ENCODE measurements at regions of chr1 and their contacts with region 1.

Region 1: DNA sequence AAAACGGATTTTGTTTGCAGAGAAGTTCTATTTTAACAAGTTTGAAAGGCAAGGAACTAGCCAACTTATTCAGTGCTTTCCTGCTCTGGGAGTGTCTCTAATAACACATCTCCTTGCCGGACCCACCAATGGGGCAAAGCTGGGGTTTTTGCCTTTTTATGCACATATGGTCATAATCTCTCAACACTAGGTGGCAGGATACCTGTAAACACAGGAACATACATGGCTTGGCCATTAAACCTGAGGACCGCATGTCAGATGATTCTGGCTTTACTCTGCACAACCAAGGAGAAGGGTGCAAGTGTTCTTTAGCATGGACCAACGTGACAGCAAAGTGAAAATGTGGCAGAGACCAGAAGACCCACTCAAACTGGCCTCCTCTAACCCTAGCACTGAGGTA is 4.9 kb downstream of the TMEM9 start:
- DNase-seq: no peak
- H3K4me3 Mint-ChIP-seq: no peak overlapping the region
- H3K27ac Mint-ChIP-seq: no peak overlapping the region
- H3K4me1 Mint-ChIP-seq: peaks cover 10% of the 10 kb centered on the region
- H3K27me3 Mint-ChIP-seq: no peaks in the 10 kb centered on the region

Region 2: DNA sequence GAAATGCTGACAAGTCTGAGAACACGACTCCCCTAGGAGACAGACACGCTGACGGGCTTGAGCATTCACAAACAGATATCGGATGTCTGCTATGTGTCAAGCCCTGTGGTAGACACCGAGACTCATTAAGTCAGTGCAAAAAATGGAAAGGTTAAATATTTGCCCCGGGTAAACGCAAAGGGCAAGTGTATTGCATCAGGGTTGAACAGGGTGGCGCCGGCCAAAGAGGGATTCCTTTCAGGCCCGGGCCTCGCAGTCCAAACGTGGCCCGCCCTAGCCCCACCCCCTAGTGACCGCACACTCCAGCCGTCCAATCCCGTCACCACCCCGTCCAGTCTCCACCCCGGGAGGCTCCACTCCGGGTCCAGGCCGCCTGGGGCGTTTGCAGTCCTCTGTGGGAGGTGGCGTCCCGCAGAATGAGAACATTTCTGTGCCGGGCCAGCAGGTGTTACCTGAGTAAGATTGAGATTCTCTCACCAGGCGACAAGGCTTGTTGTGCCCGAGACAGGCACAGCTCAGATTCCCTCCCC is 21.2 kb after region 1 on chr1:
- CTCF ChIA-PET with region 1: interaction called, 11 read pairs
- DNase-seq: peak; percentile 77
- H3K4me3 Mint-ChIP-seq: peak overlapping the region; percentile 63
- H3K27ac Mint-ChIP-seq: no peak overlapping the region
- H3K4me1 Mint-ChIP-seq: peaks cover 13% of the 10 kb centered on the region
- H3K27me3 Mint-ChIP-seq: peaks cover 53% of the 10 kb centered on the region

Region 3: DNA sequence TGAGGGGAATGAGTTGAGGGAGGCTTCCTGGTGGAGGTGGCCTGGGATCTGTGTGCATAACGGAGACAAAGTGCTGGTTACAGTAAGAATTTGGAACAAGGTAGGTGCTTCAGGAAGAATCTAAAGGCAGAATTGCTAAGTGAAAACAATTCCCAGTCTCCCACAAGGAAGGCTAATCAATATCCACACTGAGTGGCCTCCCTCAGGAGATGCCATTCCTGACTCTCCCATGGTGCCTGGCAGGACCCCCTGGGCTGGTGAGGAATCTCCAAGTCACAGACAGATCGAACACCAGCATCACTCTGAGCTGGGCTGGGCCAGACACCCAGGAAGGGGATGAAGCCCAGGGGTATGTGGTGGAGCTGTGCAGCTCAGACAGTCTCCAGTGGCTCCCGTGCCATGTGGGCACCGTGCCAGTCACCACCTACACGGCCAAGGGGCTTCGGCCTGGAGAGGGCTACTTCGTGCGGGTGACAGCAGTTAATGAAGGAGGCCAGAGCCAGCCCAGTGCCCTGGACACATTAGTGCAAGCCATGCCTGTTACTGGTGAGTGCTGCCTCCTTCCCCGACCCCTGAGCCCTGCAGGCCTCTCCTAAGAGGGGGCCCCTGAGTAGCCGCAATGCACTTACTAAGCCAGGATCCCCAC is 71.9 kb after region 1 on chr1:
- CTCF ChIA-PET with region 1: interaction called, 10 read pairs
- DNase-seq: peak; percentile 19
- H3K4me3 Mint-ChIP-seq: no peak overlapping the region
- H3K27ac Mint-ChIP-seq: no peak overlapping the region
- H3K4me1 Mint-ChIP-seq: no peaks in the 10 kb centered on the region
- H3K27me3 Mint-ChIP-seq: no peaks in the 10 kb centered on the region

Measured in activated naive CD4-positive, alpha-beta T cell treated with anti-CD3 and anti-CD28 coated beads, Interleukin-2, amount 10 ng/mL, durations not matched to agents 7 days and 5 days (primary cell).